Activated B cell treated with CpG ODN at 0.5 μM for 24 hours (primary cell): ENCODE measurements at regions of chr4 and their contacts with region 1.

Region 1: GRCh38 chr4:107757864-107758476 is 37.9 kb upstream of the PAPSS1 start:
- DNase-seq: no peak
- ATAC-seq: no peak
- H3K4me3 Mint-ChIP-seq: no peak overlapping the region
- H3K27ac Mint-ChIP-seq: no peak overlapping the region
- H3K4me1 Mint-ChIP-seq: peaks cover 10% of the 10 kb centered on the region
- H3K27me3 Mint-ChIP-seq: peaks cover 4% of the 10 kb centered on the region
- CTCF ChIP-seq: no peak

Region 2: DNA sequence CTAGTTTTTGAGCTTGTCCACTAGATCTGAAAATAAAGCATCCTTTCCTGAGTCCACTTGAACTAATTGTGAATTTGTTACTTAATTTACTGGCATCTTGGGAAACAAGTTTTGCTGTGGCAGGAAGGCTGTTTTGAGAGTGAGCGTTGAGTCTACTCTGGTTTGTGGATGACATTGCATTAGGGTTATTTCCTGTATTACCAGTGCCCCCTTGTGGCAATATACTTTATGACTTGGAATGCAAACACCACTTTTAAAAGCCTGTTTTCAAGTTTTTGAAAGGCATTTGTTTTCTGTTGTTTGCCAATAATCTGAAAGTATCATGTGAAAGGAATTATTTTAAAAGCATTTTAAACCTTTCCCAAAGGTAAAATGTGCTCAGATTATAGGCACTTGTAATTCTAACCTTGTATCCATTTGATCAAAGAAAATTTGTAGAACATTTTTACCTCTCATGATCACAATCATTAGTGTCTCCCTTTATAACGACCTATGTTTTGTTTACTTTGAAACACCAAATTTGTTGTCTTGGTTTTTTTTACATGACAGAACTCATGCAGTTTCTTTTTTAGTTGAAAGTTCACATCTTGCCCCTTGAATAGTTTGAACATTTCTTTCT is 155.4 kb after region 1 on chr4:
- CTCF ChIA-PET with region 1: interaction called, 4 read pairs
- POLR2A ChIA-PET with region 1: no interaction called
- intact Hi-C with region 1: loop called (anchors 1 kb)
- DNase-seq: no peak
- ATAC-seq: peak; percentile 75
- H3K4me3 Mint-ChIP-seq: no peak overlapping the region
- H3K27ac Mint-ChIP-seq: no peak overlapping the region
- H3K4me1 Mint-ChIP-seq: peaks cover 2% of the 10 kb centered on the region
- H3K27me3 Mint-ChIP-seq: peaks cover 1% of the 10 kb centered on the region
- CTCF ChIP-seq: peak; percentile 45

Region 3: GRCh38 chr4:107996949-107997788 is 239.2 kb after region 1 on chr4:
- CTCF ChIA-PET with region 1: no interaction called
- POLR2A ChIA-PET with region 1: no interaction called
- intact Hi-C with region 1: no loop called
- DNase-seq: no peak
- ATAC-seq: no peak
- H3K4me3 Mint-ChIP-seq: no peak overlapping the region
- H3K27ac Mint-ChIP-seq: no peak overlapping the region
- H3K4me1 Mint-ChIP-seq: peaks cover 35% of the 10 kb centered on the region
- H3K27me3 Mint-ChIP-seq: no peaks in the 10 kb centered on the region
- CTCF ChIP-seq: no peak